Left colon (tissue), 2 donors: ENCODE measurements at regions of chr12 and their contacts with region 1.

Region 1: DNA sequence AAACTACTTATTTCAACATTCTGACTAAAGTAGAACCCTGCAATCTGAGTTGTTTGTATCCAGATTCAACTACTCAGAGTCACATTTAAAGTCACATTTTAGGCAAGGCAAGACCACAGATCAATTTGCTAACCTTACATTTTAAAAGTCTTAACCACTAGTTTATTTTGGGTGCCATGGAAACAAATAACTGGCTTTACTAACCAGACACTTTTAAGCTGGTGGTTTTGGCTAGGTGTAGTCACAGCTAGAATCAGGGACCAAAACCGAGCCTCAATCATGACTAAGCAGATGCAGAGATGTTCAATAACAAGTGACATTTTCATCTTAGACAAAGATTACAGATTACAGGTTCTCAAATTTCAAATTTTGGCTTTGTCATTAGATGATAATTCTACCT is 115.3 kb downstream of the PDE6H start:
- DNase-seq: no peak
- ATAC-seq: no peak

Region 2: DNA sequence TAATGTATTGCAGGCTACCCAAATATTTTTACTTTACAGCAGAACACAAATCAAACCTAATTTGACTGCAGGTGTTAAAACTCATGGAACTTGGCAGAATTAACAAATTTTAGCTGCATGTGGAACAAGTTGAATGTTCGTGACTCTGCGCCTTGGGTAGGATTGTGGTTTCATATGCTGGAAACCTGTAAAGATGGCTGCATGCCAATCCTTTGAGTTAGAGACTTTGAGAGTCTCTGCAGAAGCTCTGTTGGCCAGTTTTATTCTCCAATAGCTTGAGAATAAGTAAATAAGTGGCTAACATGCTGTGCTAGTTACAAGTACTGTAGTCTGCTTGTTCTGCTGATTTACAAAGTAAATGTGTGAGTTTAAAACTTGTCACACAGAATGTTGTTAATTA is 37.4 kb before region 1 on chr12:
- intact Hi-C with region 1: loop called in 1 of 2 experiments (anchors 1 kb)
- DNase-seq: no peak
- ATAC-seq: no peak